ENCODE measurements at regions of chr12 and their contacts with region 1.

Region 1: DNA sequence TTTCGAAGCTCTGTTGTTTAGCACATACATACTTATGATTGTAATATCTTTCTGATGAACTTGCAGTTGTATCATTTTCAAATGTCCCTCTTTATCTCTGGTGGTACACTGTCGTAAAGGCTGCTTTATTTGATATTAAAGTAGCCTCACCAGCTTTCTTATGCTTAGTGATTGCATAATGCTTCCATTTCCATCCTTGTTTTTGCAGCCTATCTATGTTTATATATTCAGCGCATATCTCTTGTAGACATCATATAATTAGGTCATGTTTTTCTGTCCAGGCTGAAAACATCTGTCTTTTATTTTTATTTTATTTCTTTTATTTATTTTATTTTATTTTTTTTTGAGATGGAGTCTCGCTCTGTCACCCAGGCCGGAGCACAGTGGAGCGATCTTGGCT is 34.6 kb downstream of the ACAD10 start:
- DNase-seq: no peak

Region 2: GRCh38 chr12:111741235-111741812 is 20.9 kb after region 1 on chr12:
- intact Hi-C with region 1: loop called in 1 of 2 experiments (anchors 1 kb)
- DNase-seq: no peak

Measured in posterior vena cava (tissue), 2 donors.